Activated B cell treated with CpG ODN at 0.5 μM for 24 hours (primary cell): ENCODE measurements at regions of chr19 and their contacts with region 1.

Region 1: DNA sequence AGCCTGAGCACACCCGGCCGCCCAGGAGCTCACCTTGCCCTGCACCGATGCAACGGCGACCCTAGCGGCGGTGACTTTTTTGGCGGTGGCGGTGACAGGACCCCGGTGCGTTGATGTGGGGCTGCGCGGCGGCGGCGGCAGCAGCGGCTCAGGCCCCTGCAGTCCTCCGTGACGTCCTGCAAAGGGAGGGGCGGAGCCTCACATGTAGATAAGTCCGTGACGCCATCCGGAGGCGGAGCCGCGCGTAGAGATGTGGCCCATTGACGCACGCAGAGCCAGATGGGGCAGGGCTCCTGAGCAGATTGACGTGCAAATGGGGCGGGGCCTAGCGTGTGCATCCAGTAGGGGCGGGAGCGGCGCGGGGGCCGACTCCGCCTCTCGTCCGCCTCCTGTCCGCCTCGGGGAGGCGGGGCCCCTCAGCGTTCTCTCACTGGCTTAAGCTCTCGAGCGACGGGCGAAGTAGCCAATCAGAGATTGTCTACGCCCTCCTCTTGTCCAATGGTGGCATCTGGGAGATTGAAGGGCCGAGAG is at the start of gene RAB3A:
- DNase-seq: peak; percentile 95
- ATAC-seq: peak; percentile 86
- H3K4me3 Mint-ChIP-seq: peak within 1 kb of the TSS; percentile 92
- H3K27ac Mint-ChIP-seq: peak within 1 kb of the TSS; percentile 87
- H3K4me1 Mint-ChIP-seq: peaks cover 29% of the 10 kb centered on the region
- H3K27me3 Mint-ChIP-seq: peaks cover 5% of the 10 kb centered on the region
- CTCF ChIP-seq: no peak
- total RNA-seq, gene RAB3A: 3.8 and 4.1 TPM in 2 replicates

Region 2: GRCh38 chr19:18097217-18097992 is 106.5 kb before region 1 on chr19 and contains the start of gene MAST3:
- CTCF ChIA-PET with region 1: no interaction called
- POLR2A ChIA-PET with region 1: interaction called, 10 read pairs
- intact Hi-C with region 1: no loop called
- DNase-seq: peak; percentile 95
- ATAC-seq: peak; percentile 72
- H3K4me3 Mint-ChIP-seq: peak within 1 kb of the TSS; percentile 95
- H3K27ac Mint-ChIP-seq: peak within 1 kb of the TSS; percentile 96
- H3K4me1 Mint-ChIP-seq: peaks cover 43% of the 10 kb centered on the region
- H3K27me3 Mint-ChIP-seq: no peaks in the 10 kb centered on the region
- CTCF ChIP-seq: no peak
- total RNA-seq, gene MAST3: 44.3 and 48.6 TPM in 2 replicates

Region 3: GRCh38 chr19:18173572-18174288 is 30.2 kb before region 1 on chr19 and contains the start of gene IFI30:
- CTCF ChIA-PET with region 1: interaction called, 7 read pairs
- POLR2A ChIA-PET with region 1: interaction called, 18 read pairs
- intact Hi-C with region 1: loop called (anchors 1 kb)
- DNase-seq: peak; percentile 85
- ATAC-seq: peak; percentile 62
- H3K4me3 Mint-ChIP-seq: peak within 1 kb of the TSS; percentile 94
- H3K27ac Mint-ChIP-seq: peak within 1 kb of the TSS; percentile 92
- H3K4me1 Mint-ChIP-seq: peaks cover 90% of the 10 kb centered on the region
- H3K27me3 Mint-ChIP-seq: no peaks in the 10 kb centered on the region
- CTCF ChIP-seq: no peak
- total RNA-seq, gene IFI30: 251 and 255 TPM in 2 replicates

Region 4: GRCh38 chr19:18233224-18233825 is 29.4 kb after region 1 on chr19:
- CTCF ChIA-PET with region 1: no interaction called
- POLR2A ChIA-PET with region 1: no interaction called
- intact Hi-C with region 1: no loop called
- DNase-seq: peak; percentile 53
- ATAC-seq: peak; percentile 85
- H3K4me3 Mint-ChIP-seq: no peak overlapping the region
- H3K27ac Mint-ChIP-seq: peak overlapping the region; percentile 50
- H3K4me1 Mint-ChIP-seq: peaks cover 17% of the 10 kb centered on the region
- H3K27me3 Mint-ChIP-seq: peaks cover 52% of the 10 kb centered on the region
- CTCF ChIP-seq: no peak

Region 5: DNA sequence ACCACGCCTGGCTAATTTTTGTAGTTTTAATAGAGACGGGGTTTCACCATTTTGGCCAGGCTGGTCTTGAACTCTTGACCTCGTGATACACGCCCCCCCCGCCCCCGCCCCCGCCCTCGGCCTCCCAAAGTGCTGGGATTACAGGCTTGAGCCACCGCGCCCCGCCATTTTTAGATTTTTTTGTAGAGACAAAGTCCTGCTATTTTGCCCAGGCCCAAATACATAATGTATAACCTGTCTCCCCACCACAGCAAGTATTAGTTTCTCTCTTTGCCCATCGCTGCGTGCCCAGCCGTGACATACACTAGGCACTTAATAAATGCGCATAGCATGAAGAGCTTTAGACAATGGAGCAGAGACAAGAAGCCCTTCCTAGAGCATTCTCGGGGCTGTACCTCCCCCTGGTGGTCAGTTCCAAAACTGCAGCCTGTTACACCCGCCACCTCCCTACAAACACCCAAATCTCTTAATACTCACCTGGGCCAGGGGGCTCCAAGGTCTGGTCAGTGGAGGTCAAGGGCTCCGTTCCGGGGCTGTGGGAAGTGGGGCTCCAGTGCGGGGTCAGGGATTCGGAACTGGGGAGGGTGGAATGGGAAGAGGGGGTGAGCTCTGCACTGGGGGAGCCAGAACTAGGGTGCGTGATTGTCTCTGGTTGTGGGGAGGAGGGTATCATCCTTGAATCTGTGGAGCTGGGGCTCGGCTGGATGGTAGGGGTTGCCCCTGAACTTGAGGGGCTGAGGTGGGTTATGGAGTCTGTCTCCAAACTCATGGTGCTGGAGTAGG is 47.9 kb after region 1 on chr19:
- CTCF ChIA-PET with region 1: interaction called, 95 read pairs
- POLR2A ChIA-PET with region 1: interaction called, 21 read pairs
- intact Hi-C with region 1: loop called (anchors 1 kb)
- DNase-seq: peak; percentile 75
- ATAC-seq: peak; percentile 68
- H3K4me3 Mint-ChIP-seq: no peak overlapping the region
- H3K27ac Mint-ChIP-seq: peak overlapping the region; percentile 47
- H3K4me1 Mint-ChIP-seq: peaks cover 33% of the 10 kb centered on the region
- H3K27me3 Mint-ChIP-seq: peaks cover 2% of the 10 kb centered on the region
- CTCF ChIP-seq: peak; percentile 69

Region 6: DNA sequence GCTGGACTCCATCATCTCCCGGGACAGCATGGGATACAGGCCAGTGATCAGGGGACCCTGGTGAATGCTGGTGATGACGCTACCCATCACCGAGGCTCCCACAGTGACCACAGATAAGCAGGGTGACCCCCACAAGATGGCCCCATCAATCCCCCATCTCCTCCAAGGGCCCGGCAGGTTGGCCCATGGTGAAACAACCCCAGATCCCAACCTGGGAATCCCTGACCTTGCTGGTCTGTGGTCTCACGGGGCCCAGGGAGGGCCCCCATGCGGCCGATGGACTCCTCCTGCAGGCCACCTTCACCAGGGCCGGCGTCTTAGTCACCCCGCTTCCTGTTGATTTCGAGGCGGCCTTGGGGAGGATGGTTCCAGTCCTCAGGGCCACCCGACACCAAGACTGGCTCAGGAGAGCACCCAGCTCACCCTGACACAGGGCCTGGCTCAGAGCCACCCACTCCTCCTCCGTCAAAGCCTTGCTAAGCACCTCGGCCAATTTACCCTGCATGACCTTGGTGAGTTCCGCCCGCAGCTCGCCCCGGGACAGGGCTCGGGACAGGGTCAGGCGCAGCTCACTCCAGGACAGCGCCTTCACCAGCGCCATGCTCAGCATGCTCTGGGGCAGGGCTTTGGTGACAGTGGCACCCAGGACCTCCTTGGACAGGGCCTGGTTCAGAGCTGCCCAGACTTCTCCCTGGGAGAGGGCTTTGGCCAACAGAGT is 60.4 kb after region 1 on chr19:
- CTCF ChIA-PET with region 1: no interaction called
- POLR2A ChIA-PET with region 1: no interaction called
- intact Hi-C with region 1: no loop called
- DNase-seq: no peak
- ATAC-seq: no peak
- H3K4me3 Mint-ChIP-seq: no peak overlapping the region
- H3K27ac Mint-ChIP-seq: no peak overlapping the region
- H3K4me1 Mint-ChIP-seq: no peaks in the 10 kb centered on the region
- H3K27me3 Mint-ChIP-seq: no peaks in the 10 kb centered on the region
- CTCF ChIP-seq: no peak

Region 7: GRCh38 chr19:18328340-18329034 is 124.6 kb after region 1 on chr19:
- CTCF ChIA-PET with region 1: interaction called, 13 read pairs
- POLR2A ChIA-PET with region 1: interaction called, 7 read pairs
- intact Hi-C with region 1: loop called (anchors 1 kb)
- DNase-seq: peak; percentile 56
- ATAC-seq: peak; percentile 98
- H3K4me3 Mint-ChIP-seq: peak overlapping the region; percentile 56
- H3K27ac Mint-ChIP-seq: peak overlapping the region; percentile 20
- H3K4me1 Mint-ChIP-seq: peaks cover 14% of the 10 kb centered on the region
- H3K27me3 Mint-ChIP-seq: peaks cover 8% of the 10 kb centered on the region
- CTCF ChIP-seq: peak; percentile 53

Region 8: DNA sequence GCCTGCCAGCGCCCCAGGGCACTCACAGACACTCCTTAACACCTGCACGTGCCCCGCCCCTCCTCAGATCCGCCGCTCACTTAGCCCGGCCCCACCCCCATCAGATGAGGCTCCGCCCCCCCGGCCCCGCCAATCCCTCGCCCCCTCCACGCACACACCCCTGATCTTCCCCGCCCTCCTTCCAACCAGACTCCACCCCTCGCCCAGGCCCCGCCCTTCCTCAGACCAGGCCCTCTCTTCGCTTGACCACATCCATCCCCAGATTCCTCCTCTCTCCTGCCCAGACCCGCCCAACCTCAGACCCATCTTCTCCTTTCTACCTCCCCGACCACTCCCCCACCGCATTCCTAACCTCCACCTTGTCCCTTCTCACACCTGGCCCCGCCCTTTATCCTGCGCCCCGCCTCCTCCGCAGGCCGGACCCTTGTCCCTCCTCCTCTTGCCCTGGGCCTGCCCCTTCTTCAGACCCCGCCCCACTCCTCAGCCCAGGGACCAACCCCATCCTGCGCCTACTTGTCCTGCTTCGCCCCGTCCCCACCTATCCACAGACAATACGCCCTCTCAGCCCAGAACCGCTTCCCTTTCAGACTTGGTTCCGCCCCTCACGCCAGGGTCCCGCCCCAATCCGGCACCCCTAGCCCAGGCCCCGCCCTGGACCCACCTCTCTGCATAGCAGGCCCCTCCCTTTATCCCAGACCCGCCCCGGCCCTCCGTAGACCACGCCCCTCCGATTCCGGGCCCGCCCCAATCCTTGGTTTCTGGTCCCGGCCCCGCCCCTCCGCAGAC is 432.4 kb after region 1 on chr19:
- CTCF ChIA-PET with region 1: no interaction called
- POLR2A ChIA-PET with region 1: no interaction called
- intact Hi-C with region 1: loop called (anchors 1 kb)
- DNase-seq: peak; percentile 99
- ATAC-seq: peak; percentile 86
- H3K4me3 Mint-ChIP-seq: peak overlapping the region; percentile 88
- H3K27ac Mint-ChIP-seq: peak overlapping the region; percentile 84
- H3K4me1 Mint-ChIP-seq: peaks cover 23% of the 10 kb centered on the region
- H3K27me3 Mint-ChIP-seq: no peaks in the 10 kb centered on the region
- CTCF ChIP-seq: no peak